Esophagus muscularis mucosa (tissue), 4 donors: ENCODE measurements at regions of chr3 and their contacts with region 1.

Region 1: GRCh38 chr3:48151058-48151806 is 37.0 kb downstream of the CDC25A start:
- DNase-seq: no peak
- H3K4me3 ChIP-seq: no peak overlapping the region
- H3K27ac ChIP-seq: peak overlapping the region in 3 of 4 donors; percentile 15 to 41 (median 31)
- H3K4me1 ChIP-seq: peaks cover 9 to 16% (median 15%) of the 10 kb centered on the region in 4 donors
- H3K27me3 ChIP-seq: no peaks in the 10 kb centered on the region
- CTCF ChIP-seq: peak; percentile 76 to 89 (median 86)
- EP300 ChIP-seq: no peak
- POLR2A ChIP-seq: no peak

Region 2: DNA sequence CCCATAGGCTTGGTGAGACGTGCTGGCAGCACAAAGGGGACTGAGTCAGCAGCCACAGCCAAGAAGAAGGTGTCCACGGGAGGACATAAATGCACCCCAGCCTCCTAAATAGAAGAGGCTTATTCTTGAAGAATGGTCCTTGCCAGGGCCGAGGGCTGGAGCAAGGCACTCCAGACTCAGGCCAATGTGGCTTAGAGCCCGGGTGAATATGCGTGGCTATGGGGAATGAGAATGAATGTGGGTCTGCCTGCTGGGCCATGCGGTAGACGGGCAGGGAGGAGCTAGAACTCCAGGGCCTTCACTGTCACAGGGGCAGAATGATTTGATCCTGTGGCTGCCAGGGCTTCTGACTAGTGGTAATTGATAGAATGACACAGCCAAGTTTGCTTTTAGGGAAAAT is 314.2 kb before region 1 on chr3:
- intact Hi-C with region 1: loop called (anchors 5 kb)
- DNase-seq: no peak
- H3K4me3 ChIP-seq: no peak overlapping the region
- H3K27ac ChIP-seq: no peak overlapping the region
- H3K4me1 ChIP-seq: peaks cover 0 to 9% (median 0%) of the 10 kb centered on the region in 4 donors
- H3K27me3 ChIP-seq: no peaks in the 10 kb centered on the region
- CTCF ChIP-seq: no peak
- EP300 ChIP-seq: no peak
- POLR2A ChIP-seq: no peak

Region 3: DNA sequence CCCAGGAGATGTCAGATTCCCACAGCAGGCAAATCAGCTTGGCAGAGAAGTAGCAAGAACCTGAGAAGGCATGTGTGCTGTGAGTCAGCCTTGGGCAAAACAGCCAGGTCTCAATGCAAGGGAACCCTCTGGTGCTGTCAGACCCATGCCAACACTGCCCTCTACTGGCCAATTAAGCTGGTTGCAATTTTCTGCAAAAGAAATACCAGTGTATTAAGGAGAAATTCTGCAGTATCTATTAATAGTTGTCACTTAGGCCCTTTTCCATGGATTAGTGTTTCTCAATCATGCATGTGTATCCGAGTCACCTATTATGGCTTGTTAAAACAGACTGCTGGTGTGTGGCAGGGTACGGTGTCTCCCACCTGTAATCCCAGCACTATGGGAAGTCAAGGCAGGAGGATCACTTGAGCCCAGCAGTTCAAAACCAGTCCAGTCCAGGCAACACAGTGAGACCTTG is 161.2 kb before region 1 on chr3:
- intact Hi-C with region 1: loop called (anchors 5 kb)
- DNase-seq: peak; percentile 93
- H3K4me3 ChIP-seq: no peak overlapping the region
- H3K27ac ChIP-seq: peak overlapping the region in 1 of 4 donors; percentile 12
- H3K4me1 ChIP-seq: peaks cover 23 to 40% (median 27%) of the 10 kb centered on the region in 4 donors
- H3K27me3 ChIP-seq: no peaks in the 10 kb centered on the region
- CTCF ChIP-seq: peak; percentile 93 to 94 (median 93)
- EP300 ChIP-seq: no peak
- POLR2A ChIP-seq: no peak

Region 4: DNA sequence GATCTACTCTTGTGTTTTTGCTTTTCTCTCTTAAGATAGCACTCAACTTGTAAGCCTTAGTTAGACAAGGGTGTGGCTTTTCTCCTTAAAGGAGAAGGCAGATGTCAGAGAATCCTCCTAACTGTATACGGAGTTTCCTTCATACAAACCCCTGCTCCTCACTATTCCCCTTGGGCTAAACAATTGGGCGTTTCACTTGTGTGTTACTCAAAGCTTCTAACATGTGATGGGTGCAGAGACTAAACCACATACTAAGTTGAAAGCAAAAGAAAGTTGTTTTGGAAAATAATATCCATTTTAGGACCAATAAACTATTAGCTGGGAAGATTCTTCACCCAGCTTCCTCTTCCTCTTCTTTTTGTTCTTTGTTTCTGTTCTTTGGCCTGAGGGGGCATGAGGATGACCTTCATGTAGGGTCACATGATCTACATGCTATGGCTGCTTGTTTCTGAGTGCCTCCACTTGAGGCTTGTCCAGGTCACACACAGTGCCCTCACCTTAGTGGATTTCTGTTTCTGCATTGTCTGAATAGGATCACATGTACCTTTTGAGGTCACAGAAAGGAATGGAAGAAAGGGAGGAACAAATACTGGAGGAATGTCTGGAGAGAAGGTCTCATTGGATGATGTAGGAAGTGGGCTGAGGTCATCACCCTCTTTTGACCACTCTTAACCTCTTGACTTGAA is 167.7 kb after region 1 on chr3:
- intact Hi-C with region 1: no loop called
- DNase-seq: no peak
- H3K4me3 ChIP-seq: no peak overlapping the region
- H3K27ac ChIP-seq: no peak overlapping the region
- H3K4me1 ChIP-seq: no peaks in the 10 kb centered on the region
- H3K27me3 ChIP-seq: no peaks in the 10 kb centered on the region
- CTCF ChIP-seq: no peak
- EP300 ChIP-seq: no peak
- POLR2A ChIP-seq: no peak